IMR-90 (cell line): ENCODE measurements at regions of chr12 and their contacts with region 1.

Region 1: DNA sequence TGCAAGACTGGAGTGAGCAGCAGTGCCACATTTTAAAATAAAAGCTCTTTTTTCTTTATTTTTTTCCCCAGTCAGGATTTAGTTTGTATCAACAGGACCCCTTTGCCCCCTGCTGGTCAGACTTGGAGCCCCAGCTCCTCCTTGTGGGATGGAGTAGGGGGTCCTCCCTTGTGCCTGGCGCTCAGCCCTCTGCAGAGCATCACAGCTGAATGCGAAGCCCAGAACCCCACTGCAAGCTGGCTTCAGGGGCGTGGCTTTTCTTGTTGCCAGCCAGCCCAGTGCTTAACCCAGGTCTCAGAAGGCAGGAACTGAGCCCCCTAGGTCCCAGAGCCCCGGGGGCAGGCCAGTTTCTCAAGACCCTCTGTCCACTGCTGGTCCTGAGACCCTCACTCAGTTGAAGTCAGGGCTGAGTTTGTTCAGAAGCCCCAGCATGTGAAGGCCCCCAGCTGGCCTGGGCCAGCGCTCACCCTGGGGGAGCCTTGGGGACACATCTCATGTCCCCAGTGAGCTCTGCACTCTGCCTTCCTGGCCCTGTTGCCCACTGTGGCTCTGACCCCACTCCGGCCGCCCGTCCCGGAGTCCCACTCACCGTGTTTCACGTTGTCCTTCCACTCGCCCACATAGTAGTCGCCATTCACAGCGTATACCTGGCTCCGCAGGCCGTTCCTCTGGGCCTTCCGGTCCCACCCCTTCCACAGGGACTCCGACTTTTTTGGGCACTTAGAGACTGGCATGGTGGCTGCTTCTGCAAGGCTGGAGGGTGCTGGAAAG is 519 bp downstream of the MORN3 start:
- DNase-seq: peak; percentile 36
- ATAC-seq: peak; percentile 53
- H3K4me3 ChIP-seq: no peak overlapping the region
- H3K27ac ChIP-seq: no peak overlapping the region
- H3K4me1 ChIP-seq: peaks cover 3% of the 10 kb centered on the region
- H3K27me3 ChIP-seq: no peaks in the 10 kb centered on the region
- CTCF ChIP-seq: peak; percentile 60
- POLR2A ChIP-seq: no peak
- RAD21 ChIP-seq: peak; percentile 66

Region 2: DNA sequence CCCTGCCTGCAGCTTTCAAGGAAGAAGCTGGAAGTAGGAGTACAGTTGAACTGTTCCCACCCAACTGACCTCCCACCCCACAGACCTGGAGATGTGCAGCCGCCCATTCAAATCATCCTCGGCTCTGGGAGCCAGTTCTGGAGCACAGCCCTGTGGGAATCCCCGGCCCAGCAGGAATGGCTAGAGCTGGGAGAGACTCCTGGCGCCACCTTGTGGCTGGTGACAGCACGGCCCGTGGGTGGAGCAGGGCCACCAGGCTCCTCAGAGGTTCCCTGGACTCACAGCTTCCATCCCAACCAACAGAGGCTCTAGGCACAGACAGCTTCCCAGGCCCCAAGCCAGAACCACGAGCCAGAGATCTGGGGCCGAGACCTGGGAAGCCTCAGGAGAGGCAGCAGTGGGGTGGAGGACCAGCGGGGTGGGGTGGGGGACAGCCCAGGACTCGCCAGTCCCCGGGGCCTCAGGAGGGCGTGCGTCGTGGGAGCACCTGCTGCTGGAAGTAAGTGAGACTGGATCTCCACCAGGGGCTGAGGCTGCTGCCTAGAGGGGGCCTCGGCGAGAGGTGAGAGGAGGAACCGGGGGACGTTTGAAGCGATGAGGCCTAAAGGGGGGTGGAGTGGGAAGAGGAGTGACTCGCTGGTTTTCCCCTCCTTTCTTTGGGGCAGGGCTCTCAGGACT is 225.6 kb before region 1 on chr12:
- CTCF ChIA-PET with region 1: no interaction called
- POLR2A ChIA-PET with region 1: no interaction called
- dilution Hi-C with region 1: no loop called
- in situ Hi-C with region 1: no loop called
- intact Hi-C with region 1: no loop called
- DNase-seq: peak; percentile 70
- ATAC-seq: peak; percentile 100
- H3K4me3 ChIP-seq: no peak overlapping the region
- H3K27ac ChIP-seq: no peak overlapping the region
- H3K4me1 ChIP-seq: no peaks in the 10 kb centered on the region
- H3K27me3 ChIP-seq: no peaks in the 10 kb centered on the region
- CTCF ChIP-seq: peak; percentile 92
- POLR2A ChIP-seq: no peak
- RAD21 ChIP-seq: peak; percentile 84

Region 3: DNA sequence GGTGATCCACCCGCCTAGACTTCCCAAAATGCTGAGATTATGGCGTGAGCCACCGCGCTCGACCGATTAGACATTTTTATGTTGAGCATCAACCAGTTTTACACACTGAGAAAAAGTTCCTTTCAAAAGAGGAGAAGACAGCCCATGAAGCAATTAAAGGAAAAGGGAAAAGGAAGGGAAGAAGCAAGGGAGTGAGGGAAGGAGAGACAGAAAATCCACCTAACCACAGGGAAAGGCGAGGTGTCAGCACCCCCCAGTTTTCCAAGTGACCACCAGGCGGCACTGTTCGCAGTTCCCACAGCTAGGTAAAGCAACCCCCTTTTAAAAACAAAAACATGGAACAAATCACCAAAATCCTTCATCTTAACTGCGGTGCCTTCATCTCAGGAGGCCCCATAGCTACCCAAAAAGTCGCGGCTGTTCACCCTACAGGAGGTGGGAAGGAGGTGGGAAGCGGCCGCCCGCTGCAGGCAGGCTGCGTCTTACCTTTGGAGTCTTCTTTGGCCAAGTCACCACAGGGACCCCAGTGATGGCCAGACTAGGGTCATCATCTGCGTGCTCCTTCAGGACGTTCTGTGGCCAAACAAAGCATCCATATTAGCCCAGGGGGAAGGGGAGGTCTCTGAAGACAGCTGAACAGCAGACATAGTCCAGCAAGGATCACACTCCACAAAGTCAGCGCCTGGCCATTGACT is 174.7 kb before region 1 on chr12:
- CTCF ChIA-PET with region 1: interaction called, 4 read pairs
- POLR2A ChIA-PET with region 1: no interaction called
- dilution Hi-C with region 1: no loop called
- in situ Hi-C with region 1: loop called (anchors 5 kb)
- intact Hi-C with region 1: no loop called
- DNase-seq: peak; percentile 33
- ATAC-seq: peak; percentile 72
- H3K4me3 ChIP-seq: no peak overlapping the region
- H3K27ac ChIP-seq: no peak overlapping the region
- H3K4me1 ChIP-seq: no peaks in the 10 kb centered on the region
- H3K27me3 ChIP-seq: no peaks in the 10 kb centered on the region
- CTCF ChIP-seq: peak; percentile 72
- POLR2A ChIP-seq: no peak
- RAD21 ChIP-seq: peak; percentile 50

Region 4: DNA sequence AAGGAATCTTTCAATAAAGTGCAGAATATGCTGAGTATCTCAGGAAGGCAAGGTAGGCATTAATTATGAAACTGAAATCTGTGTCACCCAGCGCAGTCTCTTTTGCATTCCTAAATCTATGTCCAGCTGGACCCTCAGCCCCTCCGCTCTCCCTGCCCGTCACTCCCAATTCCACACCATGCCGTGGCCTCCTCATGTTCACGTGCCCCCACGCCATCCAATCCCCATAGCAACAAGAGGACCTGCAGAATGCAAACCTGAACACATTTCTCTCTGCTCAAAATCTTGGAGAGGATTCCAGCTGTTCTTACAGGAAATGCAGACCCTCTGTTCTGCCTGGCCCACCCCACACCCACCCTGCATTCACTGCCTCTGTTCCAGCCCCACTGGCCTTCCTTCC is 123.5 kb before region 1 on chr12:
- CTCF ChIA-PET with region 1: no interaction called
- POLR2A ChIA-PET with region 1: no interaction called
- dilution Hi-C with region 1: no loop called
- in situ Hi-C with region 1: loop called (anchors 5 kb)
- intact Hi-C with region 1: no loop called
- DNase-seq: no peak
- ATAC-seq: no peak
- H3K4me3 ChIP-seq: no peak overlapping the region
- H3K27ac ChIP-seq: no peak overlapping the region
- H3K4me1 ChIP-seq: no peaks in the 10 kb centered on the region
- H3K27me3 ChIP-seq: no peaks in the 10 kb centered on the region
- CTCF ChIP-seq: no peak
- POLR2A ChIP-seq: no peak
- RAD21 ChIP-seq: no peak

Region 5: GRCh38 chr12:121550974-121551634 is 117.8 kb before region 1 on chr12:
- CTCF ChIA-PET with region 1: interaction called, 15 read pairs
- POLR2A ChIA-PET with region 1: no interaction called
- dilution Hi-C with region 1: no loop called
- in situ Hi-C with region 1: loop called (anchors 5 kb)
- intact Hi-C with region 1: loop called (anchors 1 kb)
- DNase-seq: no peak
- ATAC-seq: no peak
- H3K4me3 ChIP-seq: no peak overlapping the region
- H3K27ac ChIP-seq: no peak overlapping the region
- H3K4me1 ChIP-seq: no peaks in the 10 kb centered on the region
- H3K27me3 ChIP-seq: no peaks in the 10 kb centered on the region
- CTCF ChIP-seq: no peak
- POLR2A ChIP-seq: no peak
- RAD21 ChIP-seq: no peak

Region 6: DNA sequence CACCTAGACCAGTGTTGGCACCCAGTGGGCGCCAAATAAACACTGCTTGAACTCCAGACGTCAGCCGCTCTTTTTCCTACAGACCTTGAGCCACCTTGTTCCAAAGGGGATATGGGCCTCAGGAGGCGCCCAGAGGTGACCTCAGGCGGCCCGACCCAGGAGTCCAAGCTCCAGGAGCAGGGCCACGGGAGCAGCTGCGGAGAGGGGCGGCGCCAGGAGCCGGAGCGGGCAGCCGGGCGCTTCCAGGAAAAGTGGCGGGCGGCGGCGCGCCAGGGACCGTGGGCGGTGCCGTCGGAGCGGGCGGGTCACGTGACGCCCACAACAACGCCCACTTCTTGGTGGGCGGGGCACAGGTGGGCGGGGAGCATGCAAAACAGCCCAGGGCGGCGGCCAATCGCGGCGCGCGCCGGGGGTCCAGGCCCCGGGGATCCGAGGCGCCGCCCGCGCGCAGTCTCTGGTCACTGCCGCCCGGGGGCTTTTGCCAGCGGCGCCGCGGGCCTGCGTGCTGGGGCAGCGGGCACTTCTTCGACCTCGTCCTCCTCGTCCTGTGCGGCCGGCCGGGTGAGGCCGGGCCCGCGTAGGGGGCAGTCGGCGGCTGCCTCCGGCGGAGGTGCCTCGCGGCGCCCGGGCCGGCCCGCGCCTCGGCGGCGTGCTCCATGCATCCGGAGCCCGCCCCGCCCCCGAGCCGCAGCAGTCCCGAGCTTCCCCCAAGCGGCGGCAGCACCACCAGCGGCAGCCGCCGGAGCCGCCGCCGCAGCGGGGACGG is 42.7 kb before region 1 on chr12 and contains the start of gene ORAI1:
- CTCF ChIA-PET with region 1: interaction called, 7 read pairs
- POLR2A ChIA-PET with region 1: no interaction called
- dilution Hi-C with region 1: no loop called
- in situ Hi-C with region 1: no loop called
- intact Hi-C with region 1: loop called (anchors 5 kb)
- DNase-seq: peak; percentile 91
- ATAC-seq: peak; percentile 91
- H3K4me3 ChIP-seq: peak within 1 kb of the TSS; percentile 73
- H3K27ac ChIP-seq: peak within 1 kb of the TSS; percentile 71
- H3K4me1 ChIP-seq: peaks cover 15% of the 10 kb centered on the region
- H3K27me3 ChIP-seq: no peaks in the 10 kb centered on the region
- CTCF ChIP-seq: peak; percentile 25
- POLR2A ChIP-seq: no peak
- RAD21 ChIP-seq: no peak
- total RNA-seq, gene ORAI1: 3.9 and 4.4 TPM in 2 replicates